ENCODE measurements at regions of chr20 and their contacts with region 1.

Region 1: GRCh38 chr20:50491926-50492634 is 18.1 kb upstream of the PTPN1 start:
- DNase-seq: no peak
- H3K4me3 Mint-ChIP-seq: no peak overlapping the region
- H3K27ac Mint-ChIP-seq: peak overlapping the region; percentile 91
- H3K4me1 Mint-ChIP-seq: peaks cover 29% of the 10 kb centered on the region
- H3K27me3 Mint-ChIP-seq: no peaks in the 10 kb centered on the region

Region 2: GRCh38 chr20:50292324-50293243 is 199.5 kb before region 1 on chr20:
- CTCF ChIA-PET with region 1: no interaction called
- intact Hi-C with region 1: no loop called
- DNase-seq: no peak
- H3K4me3 Mint-ChIP-seq: no peak overlapping the region
- H3K27ac Mint-ChIP-seq: no peak overlapping the region
- H3K4me1 Mint-ChIP-seq: peaks cover 6% of the 10 kb centered on the region
- H3K27me3 Mint-ChIP-seq: no peaks in the 10 kb centered on the region

Region 3: GRCh38 chr20:50338479-50339391 is 153.3 kb before region 1 on chr20:
- CTCF ChIA-PET with region 1: no interaction called
- intact Hi-C with region 1: loop called (anchors 1 kb)
- DNase-seq: peak; percentile 88
- H3K4me3 Mint-ChIP-seq: peak overlapping the region; percentile 53
- H3K27ac Mint-ChIP-seq: peak overlapping the region; percentile 92
- H3K4me1 Mint-ChIP-seq: peaks cover 36% of the 10 kb centered on the region
- H3K27me3 Mint-ChIP-seq: no peaks in the 10 kb centered on the region

Region 4: GRCh38 chr20:50478162-50479036 is 13.7 kb before region 1 on chr20:
- CTCF ChIA-PET with region 1: interaction called, 8 read pairs
- intact Hi-C with region 1: loop called (anchors 1 kb)
- DNase-seq: peak; percentile 89
- H3K4me3 Mint-ChIP-seq: no peak overlapping the region
- H3K27ac Mint-ChIP-seq: no peak overlapping the region
- H3K4me1 Mint-ChIP-seq: peaks cover 26% of the 10 kb centered on the region
- H3K27me3 Mint-ChIP-seq: no peaks in the 10 kb centered on the region

Region 5: GRCh38 chr20:50546729-50547314 is 54.7 kb after region 1 on chr20:
- CTCF ChIA-PET with region 1: interaction called, 3 read pairs
- intact Hi-C with region 1: loop called (anchors 2 kb)
- DNase-seq: peak; percentile 63
- H3K4me3 Mint-ChIP-seq: peak overlapping the region; percentile 64
- H3K27ac Mint-ChIP-seq: peak overlapping the region; percentile 94
- H3K4me1 Mint-ChIP-seq: peaks cover 70% of the 10 kb centered on the region
- H3K27me3 Mint-ChIP-seq: no peaks in the 10 kb centered on the region

Region 6: GRCh38 chr20:50561379-50562078 is 69.4 kb after region 1 on chr20:
- CTCF ChIA-PET with region 1: interaction called, 3 read pairs
- intact Hi-C with region 1: loop called (anchors 1 kb)
- DNase-seq: peak; percentile 85
- H3K4me3 Mint-ChIP-seq: peak overlapping the region; percentile 89
- H3K27ac Mint-ChIP-seq: peak overlapping the region; percentile 99
- H3K4me1 Mint-ChIP-seq: peaks cover 87% of the 10 kb centered on the region
- H3K27me3 Mint-ChIP-seq: no peaks in the 10 kb centered on the region

Region 7: DNA sequence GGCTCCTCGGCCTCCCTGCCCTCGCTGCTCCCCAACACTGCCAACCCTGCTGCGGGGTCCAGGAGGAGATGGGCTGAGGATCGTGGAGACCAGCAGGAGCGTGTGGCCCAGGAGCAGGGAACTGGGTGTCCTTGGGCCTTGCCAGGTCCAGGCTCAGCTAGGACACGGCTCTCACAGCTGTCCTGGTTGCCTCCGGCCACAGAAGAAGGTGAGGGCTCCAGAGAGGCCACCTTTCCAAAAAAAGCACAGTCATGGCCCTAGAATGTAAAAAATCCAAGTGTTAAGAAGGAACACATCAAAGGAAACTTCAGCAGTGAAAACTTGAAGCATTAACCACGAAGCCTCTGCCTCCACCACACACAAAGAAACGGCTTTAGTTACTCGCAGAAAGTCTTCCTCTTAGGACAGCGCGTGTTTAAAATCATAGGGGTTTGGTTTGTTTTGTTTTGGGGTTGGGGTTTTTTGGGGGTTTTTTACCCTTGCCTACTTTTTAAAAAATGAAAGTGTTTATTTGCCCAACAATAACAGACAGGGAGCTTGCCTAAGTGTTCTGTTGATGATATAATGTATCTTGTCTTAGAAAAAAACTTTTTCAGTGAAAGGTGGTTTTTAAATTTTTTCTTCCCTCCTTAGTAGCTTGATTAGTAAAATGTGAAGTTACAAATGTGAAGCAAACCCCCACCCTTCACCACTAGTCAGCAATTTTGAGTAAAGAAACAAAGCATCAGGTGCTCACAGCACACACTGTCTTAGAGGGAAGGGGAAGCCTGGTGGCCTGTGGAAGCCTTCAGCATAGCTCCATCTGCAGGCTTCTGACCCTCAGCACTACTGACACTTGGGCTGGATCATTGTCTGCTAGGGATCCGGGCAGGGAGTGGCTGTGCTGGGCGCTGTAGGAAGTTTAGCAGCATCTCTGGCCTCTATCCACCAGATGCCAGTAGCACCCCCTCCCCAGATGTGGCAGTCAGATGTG is 78.1 kb after region 1 on chr20:
- CTCF ChIA-PET with region 1: interaction called, 5 read pairs
- intact Hi-C with region 1: loop called (anchors 1 kb)
- DNase-seq: peak; percentile 83
- H3K4me3 Mint-ChIP-seq: peak overlapping the region; percentile 23
- H3K27ac Mint-ChIP-seq: peak overlapping the region; percentile 91
- H3K4me1 Mint-ChIP-seq: peaks cover 84% of the 10 kb centered on the region
- H3K27me3 Mint-ChIP-seq: no peaks in the 10 kb centered on the region

Region 8: DNA sequence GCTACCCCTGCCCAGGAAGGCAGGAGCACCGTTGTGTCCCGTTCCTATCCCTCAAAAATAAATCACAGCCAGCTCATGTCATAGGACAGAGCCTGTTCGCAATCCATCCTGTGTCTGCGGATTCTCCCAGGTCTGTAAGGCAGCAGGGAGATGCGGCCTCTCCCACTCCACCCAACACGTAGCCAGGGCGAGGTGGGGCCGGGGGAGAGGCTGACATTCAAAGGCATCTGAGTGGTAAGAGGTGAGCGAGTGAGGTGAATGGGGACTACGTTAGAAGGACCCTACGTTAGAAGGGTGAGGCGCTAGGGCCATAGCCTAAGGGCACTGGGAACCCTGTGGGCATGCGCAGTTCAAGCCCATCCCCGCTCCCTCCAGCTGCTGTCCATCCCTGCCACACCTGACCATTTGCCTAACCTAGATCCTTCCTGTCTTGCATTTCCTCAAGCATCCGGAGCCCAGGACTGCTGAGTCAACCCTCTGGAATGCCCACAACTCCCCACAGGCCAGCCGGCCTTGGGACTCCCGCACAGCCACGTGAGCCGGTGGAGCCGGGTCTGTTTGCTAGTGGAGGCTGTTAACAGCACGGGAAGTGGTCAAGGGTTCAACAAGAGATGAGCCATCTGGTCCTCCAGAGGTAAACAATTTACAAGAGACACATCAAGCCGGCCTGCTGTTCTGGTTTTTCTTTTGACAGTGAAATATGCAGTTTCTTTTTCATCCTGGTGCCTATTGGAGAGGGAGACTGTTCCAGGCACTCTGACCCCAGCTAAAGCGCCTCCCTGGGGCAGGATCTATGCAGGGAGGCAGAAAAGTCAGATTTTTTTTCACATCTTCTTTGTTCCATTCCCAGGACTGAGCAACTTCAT is 153.4 kb after region 1 on chr20:
- CTCF ChIA-PET with region 1: no interaction called
- intact Hi-C with region 1: no loop called
- DNase-seq: no peak
- H3K4me3 Mint-ChIP-seq: no peak overlapping the region
- H3K27ac Mint-ChIP-seq: no peak overlapping the region
- H3K4me1 Mint-ChIP-seq: no peaks in the 10 kb centered on the region
- H3K27me3 Mint-ChIP-seq: no peaks in the 10 kb centered on the region

Region 9: GRCh38 chr20:50731055-50731871 is 239.2 kb after region 1 on chr20 and contains the start of gene PARD6B:
- CTCF ChIA-PET with region 1: no interaction called
- intact Hi-C with region 1: loop called (anchors 5 kb)
- DNase-seq: peak; percentile 100
- H3K4me3 Mint-ChIP-seq: peak within 1 kb of the TSS; percentile 86
- H3K27ac Mint-ChIP-seq: peak within 1 kb of the TSS; percentile 70
- H3K4me1 Mint-ChIP-seq: peaks cover 45% of the 10 kb centered on the region
- H3K27me3 Mint-ChIP-seq: no peaks in the 10 kb centered on the region
- total RNA-seq, gene PARD6B: 3.3 to 3.9 TPM

Region 10: GRCh38 chr20:50919567-50919966 is 427.5 kb after region 1 on chr20:
- CTCF ChIA-PET with region 1: no interaction called
- intact Hi-C with region 1: no loop called
- DNase-seq: no peak
- H3K4me3 Mint-ChIP-seq: no peak overlapping the region
- H3K27ac Mint-ChIP-seq: no peak overlapping the region
- H3K4me1 Mint-ChIP-seq: peaks cover 80% of the 10 kb centered on the region
- H3K27me3 Mint-ChIP-seq: no peaks in the 10 kb centered on the region